HepG2 (cell line): ENCODE measurements at regions of chr11 and their contacts with region 1.

Region 1: DNA sequence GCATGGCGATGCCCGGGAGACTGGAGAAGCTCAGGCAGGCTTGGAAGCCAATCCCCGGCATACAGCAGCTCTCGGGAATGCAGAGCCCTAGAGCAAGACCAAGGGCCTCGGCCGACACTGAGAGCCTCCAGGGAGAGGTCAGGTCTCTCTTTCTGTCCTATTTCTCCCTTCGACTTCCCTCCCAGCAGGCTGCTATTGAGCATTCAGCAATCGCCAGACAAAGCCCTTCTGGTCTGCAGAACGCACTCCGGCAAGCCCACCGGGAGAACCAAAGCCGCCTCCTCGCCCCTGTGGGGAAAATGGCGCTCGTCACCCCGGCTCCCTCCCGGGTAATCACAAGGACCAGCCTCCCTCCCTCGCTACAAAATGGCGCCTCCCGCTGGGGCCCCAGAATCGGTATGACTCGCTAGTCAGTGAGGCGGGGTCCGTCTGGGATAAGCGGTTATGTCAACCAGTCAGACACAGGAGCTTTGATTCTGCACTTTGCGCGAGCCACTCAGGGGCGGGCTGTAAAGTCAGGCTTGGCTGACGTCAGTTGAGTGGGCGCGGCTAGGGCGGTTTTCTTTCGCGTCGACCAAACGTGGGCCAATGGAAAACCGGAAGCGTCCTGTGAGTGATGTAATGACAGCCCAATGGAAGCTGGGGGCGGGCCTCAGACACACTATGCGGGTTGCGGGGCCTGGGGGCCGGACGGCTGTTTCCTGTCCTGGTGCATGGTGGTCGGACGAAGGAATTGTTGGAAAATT is at the start of gene ZNF143:
- DNase-seq: peak; percentile 99
- ATAC-seq: peak; percentile 88
- H3K4me3 ChIP-seq: peak within 1 kb of the TSS; percentile 97 to 98 (median 98)
- H3K27ac ChIP-seq: peak within 1 kb of the TSS; percentile 99
- H3K4me1 ChIP-seq: peaks cover 22% of the 10 kb centered on the region
- H3K27me3 ChIP-seq: no peaks in the 10 kb centered on the region; a peak in 1 of 5 replicates
- CTCF ChIP-seq: no peak
- EP300 ChIP-seq: peak; percentile 12 to 15; a peak in 3 of 4 replicates
- POLR2A ChIP-seq: peak; percentile 81 to 87
- RAD21 ChIP-seq: no peak
- total RNA-seq, gene ZNF143: 22.4 and 32.9 TPM in 2 replicates

Region 2: GRCh38 chr11:9314291-9315036 is 146.0 kb before region 1 on chr11 and contains the start of gene TMEM41B:
- CTCF ChIA-PET with region 1: no interaction called
- POLR2A ChIA-PET with region 1: interaction called, 10 read pairs
- in situ Hi-C with region 1: no loop called
- intact Hi-C with region 1: no loop called
- DNase-seq: peak; percentile 99
- ATAC-seq: peak; percentile 97
- H3K4me3 ChIP-seq: peak within 1 kb of the TSS; percentile 93 to 99 (median 95)
- H3K27ac ChIP-seq: peak within 1 kb of the TSS; percentile 98
- H3K4me1 ChIP-seq: peaks cover 51% of the 10 kb centered on the region
- H3K27me3 ChIP-seq: no peaks in the 10 kb centered on the region; a peak in 2 of 5 replicates
- CTCF ChIP-seq: peak; percentile 29; the same call in 1 of the 2 replicates
- EP300 ChIP-seq: no peak; a peak in 1 of 4 replicates
- POLR2A ChIP-seq: peak; percentile 82 to 90
- RAD21 ChIP-seq: peak; percentile 13; the same call in 1 of the 2 replicates
- total RNA-seq, gene TMEM41B: 18.8 and 36.8 TPM in 2 replicates

Region 3: GRCh38 chr11:9438611-9439010 is 21.9 kb before region 1 on chr11:
- CTCF ChIA-PET with region 1: no interaction called
- POLR2A ChIA-PET with region 1: interaction called, 11 read pairs
- in situ Hi-C with region 1: no loop called
- intact Hi-C with region 1: no loop called
- DNase-seq: no peak
- ATAC-seq: no peak
- H3K4me3 ChIP-seq: no peak overlapping the region
- H3K27ac ChIP-seq: no peak overlapping the region
- H3K4me1 ChIP-seq: no peaks in the 10 kb centered on the region
- H3K27me3 ChIP-seq: no peaks in the 10 kb centered on the region
- CTCF ChIP-seq: no peak
- EP300 ChIP-seq: no peak
- POLR2A ChIP-seq: no peak
- RAD21 ChIP-seq: no peak

Region 4: GRCh38 chr11:9498457-9499078 is 38.1 kb after region 1 on chr11:
- CTCF ChIA-PET with region 1: no interaction called
- POLR2A ChIA-PET with region 1: interaction called, 33 read pairs
- in situ Hi-C with region 1: no loop called
- intact Hi-C with region 1: no loop called
- DNase-seq: peak; percentile 23
- ATAC-seq: peak; percentile 70
- H3K4me3 ChIP-seq: no peak overlapping the region
- H3K27ac ChIP-seq: no peak overlapping the region
- H3K4me1 ChIP-seq: peaks cover 16% of the 10 kb centered on the region
- H3K27me3 ChIP-seq: no peaks in the 10 kb centered on the region
- CTCF ChIP-seq: no peak
- EP300 ChIP-seq: no peak
- POLR2A ChIP-seq: no peak
- RAD21 ChIP-seq: no peak

Region 5: GRCh38 chr11:9565822-9566560 is 105.5 kb after region 1 on chr11:
- CTCF ChIA-PET with region 1: no interaction called
- POLR2A ChIA-PET with region 1: interaction called, 12 read pairs
- in situ Hi-C with region 1: no loop called
- intact Hi-C with region 1: loop called (anchors 5 kb)
- DNase-seq: peak; percentile 99
- ATAC-seq: peak; percentile 75
- H3K4me3 ChIP-seq: peak overlapping the region in 1 of 3 experiments; percentile 12; a peak in 1 of 6 replicates
- H3K27ac ChIP-seq: peak overlapping the region; percentile 100
- H3K4me1 ChIP-seq: peaks cover 68% of the 10 kb centered on the region
- H3K27me3 ChIP-seq: no peaks in the 10 kb centered on the region
- CTCF ChIP-seq: no peak
- EP300 ChIP-seq: peak; percentile 55 to 72; a peak in 2 of 4 replicates
- POLR2A ChIP-seq: peak in 1 of 2 experiments; percentile 58; a peak in 1 of 4 replicates
- RAD21 ChIP-seq: no peak

Region 6: GRCh38 chr11:10139656-10140055 is 679.2 kb after region 1 on chr11:
- CTCF ChIA-PET with region 1: no interaction called
- POLR2A ChIA-PET with region 1: no interaction called
- in situ Hi-C with region 1: no loop called
- intact Hi-C with region 1: no loop called
- DNase-seq: no peak
- ATAC-seq: no peak
- H3K4me3 ChIP-seq: no peak overlapping the region
- H3K27ac ChIP-seq: no peak overlapping the region
- H3K4me1 ChIP-seq: 0 out of 2 replicates have a peak, but pooled peaks cover 5% of the 10 kb centered on the region
- H3K27me3 ChIP-seq: no peaks in the 10 kb centered on the region
- CTCF ChIP-seq: no peak
- EP300 ChIP-seq: no peak
- POLR2A ChIP-seq: no peak
- RAD21 ChIP-seq: no peak

Region 7: GRCh38 chr11:10307442-10308207 is 847.1 kb after region 1 on chr11:
- CTCF ChIA-PET with region 1: no interaction called
- POLR2A ChIA-PET with region 1: interaction called, 4 read pairs
- in situ Hi-C with region 1: no loop called
- intact Hi-C with region 1: loop called (anchors 5 kb)
- DNase-seq: peak; percentile 71
- ATAC-seq: peak; percentile 62
- H3K4me3 ChIP-seq: peak overlapping the region; percentile 79 to 88 (median 82)
- H3K27ac ChIP-seq: peak overlapping the region; percentile 69
- H3K4me1 ChIP-seq: peaks cover 45% of the 10 kb centered on the region
- H3K27me3 ChIP-seq: no peaks in the 10 kb centered on the region; a peak in 1 of 5 replicates
- CTCF ChIP-seq: peak; percentile 92
- EP300 ChIP-seq: peak in 1 of 2 experiments; percentile 35; a peak in 2 of 4 replicates
- POLR2A ChIP-seq: peak in 1 of 2 experiments; percentile 6; a peak in 1 of 4 replicates
- RAD21 ChIP-seq: peak; percentile 94